MCF 10A (cell line): ENCODE measurements at regions of chr5 and their contacts with region 1.

Region 1: GRCh38 chr5:153629027-153629895 is 138.8 kb downstream of the GRIA1 start:
- DNase-seq: peak; percentile 96
- H3K4me3 Mint-ChIP-seq: no peak overlapping the region
- H3K27ac Mint-ChIP-seq: no peak overlapping the region
- H3K4me1 Mint-ChIP-seq: peaks cover 11% of the 10 kb centered on the region
- H3K27me3 Mint-ChIP-seq: no peaks in the 10 kb centered on the region
- CTCF ChIP-seq: peak; percentile 56

Region 2: GRCh38 chr5:153523831-153524230 is 105.4 kb before region 1 on chr5:
- CTCF ChIA-PET with region 1: interaction called, 4 read pairs
- POLR2A ChIA-PET with region 1: no interaction called
- intact Hi-C with region 1: loop called (anchors 2 kb)
- DNase-seq: peak; percentile 82
- H3K4me3 Mint-ChIP-seq: no peak overlapping the region
- H3K27ac Mint-ChIP-seq: no peak overlapping the region
- H3K4me1 Mint-ChIP-seq: peaks cover 15% of the 10 kb centered on the region
- H3K27me3 Mint-ChIP-seq: no peaks in the 10 kb centered on the region
- CTCF ChIP-seq: no peak

Region 3: DNA sequence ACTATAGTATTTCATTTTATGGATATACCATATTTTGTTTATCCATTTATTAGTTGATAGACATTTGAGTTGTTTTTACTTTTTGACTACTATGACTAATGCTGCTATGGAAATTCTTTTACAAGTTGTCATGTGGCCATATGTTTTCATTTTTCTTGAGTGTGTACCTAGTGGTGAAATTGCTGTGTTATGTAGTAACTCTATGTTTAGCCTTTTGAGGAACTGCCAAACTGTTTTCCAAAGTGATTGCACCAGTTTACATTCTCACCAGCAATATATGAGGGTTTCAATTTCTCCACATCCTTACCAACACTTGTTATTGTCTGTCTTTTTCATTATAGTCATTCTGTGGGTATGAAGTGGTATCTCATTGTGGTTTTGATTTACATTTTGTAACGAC is 63.4 kb before region 1 on chr5:
- CTCF ChIA-PET with region 1: interaction called, 3 read pairs
- POLR2A ChIA-PET with region 1: no interaction called
- intact Hi-C with region 1: loop called (anchors 5 kb)
- DNase-seq: peak; percentile 77
- H3K4me3 Mint-ChIP-seq: no peak overlapping the region
- H3K27ac Mint-ChIP-seq: peak overlapping the region; percentile 25
- H3K4me1 Mint-ChIP-seq: peaks cover 23% of the 10 kb centered on the region
- H3K27me3 Mint-ChIP-seq: no peaks in the 10 kb centered on the region
- CTCF ChIP-seq: no peak